CD4-positive, alpha-beta memory T cell (primary cell): ENCODE measurements at regions of chr2 and their contacts with region 1.

Region 1: GRCh38 chr2:181953881-181954537 is 31.6 kb upstream of the PPP1R1C start:
- DNase-seq: peak; percentile 42 to 49 (median 45)
- H3K4me3 ChIP-seq: no peak overlapping the region
- H3K4me3 Mint-ChIP-seq: peak overlapping the region in 7 of 8 donors; percentile 65 to 82 (median 70)
- H3K27ac ChIP-seq: no peak overlapping the region
- H3K27ac Mint-ChIP-seq: no peak overlapping the region
- H3K4me1 ChIP-seq: peaks cover 10% of the 10 kb centered on the region
- H3K4me1 Mint-ChIP-seq: peaks cover 8 to 13% (median 11%) of the 10 kb centered on the region in 4 donors
- H3K27me3 ChIP-seq: no peaks in the 10 kb centered on the region
- H3K27me3 Mint-ChIP-seq: peaks cover 18 to 25% of the 10 kb centered on the region in 2 donors

Region 2: GRCh38 chr2:180125245-180125962 is 1828.6 kb before region 1 on chr2:
- CTCF ChIA-PET with region 1: no interaction called
- POLR2A ChIA-PET with region 1: no interaction called
- intact Hi-C with region 1: loop called (anchors 1 kb)
- DNase-seq: peak; percentile 28 to 44 (median 38)
- H3K4me3 ChIP-seq: no peak overlapping the region
- H3K4me3 Mint-ChIP-seq: peak overlapping the region in 1 of 8 donors; percentile 29
- H3K27ac ChIP-seq: no peak overlapping the region
- H3K27ac Mint-ChIP-seq: no peak overlapping the region
- H3K4me1 ChIP-seq: no peaks in the 10 kb centered on the region
- H3K4me1 Mint-ChIP-seq: peaks cover 0 to 7% (median 4%) of the 10 kb centered on the region in 4 donors
- H3K27me3 ChIP-seq: no peaks in the 10 kb centered on the region
- H3K27me3 Mint-ChIP-seq: peaks cover 0 to 7% of the 10 kb centered on the region in 2 donors

Region 3: DNA sequence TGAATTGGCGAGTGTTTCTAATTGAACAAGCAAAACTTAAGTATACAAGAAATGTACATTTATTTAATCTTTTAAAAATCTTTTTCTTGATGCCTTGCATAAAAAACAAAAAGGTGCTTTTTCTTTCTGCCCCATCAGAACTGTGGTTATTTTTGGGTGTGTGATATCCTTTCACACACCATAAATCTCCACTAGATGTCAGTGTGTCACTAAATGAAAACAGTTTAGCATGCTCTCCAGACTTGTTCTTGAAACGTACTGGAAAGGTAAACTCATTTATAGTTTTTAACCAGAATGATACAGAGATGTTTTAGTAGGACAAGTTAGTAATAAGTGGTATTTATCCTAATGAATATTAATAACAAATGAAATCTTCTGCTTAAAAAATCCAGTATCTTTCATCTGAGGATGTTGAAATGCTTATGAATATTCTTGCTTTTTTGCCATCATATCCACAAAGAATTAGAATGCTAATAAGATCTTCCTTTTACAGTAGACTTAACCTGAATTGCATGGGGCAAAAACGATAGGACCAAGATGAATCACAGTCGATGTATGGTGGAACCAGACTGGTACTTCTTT is 876.8 kb before region 1 on chr2:
- CTCF ChIA-PET with region 1: interaction called, 3 read pairs
- POLR2A ChIA-PET with region 1: no interaction called
- intact Hi-C with region 1: loop called (anchors 1 kb)
- DNase-seq: peak; percentile 36 to 69 (median 65)
- H3K4me3 ChIP-seq: no peak overlapping the region
- H3K4me3 Mint-ChIP-seq: no peak overlapping the region
- H3K27ac ChIP-seq: no peak overlapping the region
- H3K27ac Mint-ChIP-seq: no peak overlapping the region
- H3K4me1 ChIP-seq: no peaks in the 10 kb centered on the region
- H3K4me1 Mint-ChIP-seq: peaks cover 0 to 3% (median 2%) of the 10 kb centered on the region in 4 donors
- H3K27me3 ChIP-seq: no peaks in the 10 kb centered on the region
- H3K27me3 Mint-ChIP-seq: peaks cover 0 to 2% of the 10 kb centered on the region in 2 donors

Region 4: GRCh38 chr2:181998045-181998835 is 44.2 kb after region 1 on chr2:
- CTCF ChIA-PET with region 1: no interaction called
- POLR2A ChIA-PET with region 1: no interaction called
- intact Hi-C with region 1: no loop called
- DNase-seq: no peak
- H3K4me3 ChIP-seq: no peak overlapping the region
- H3K4me3 Mint-ChIP-seq: peak overlapping the region in 1 of 8 donors; percentile 17
- H3K27ac ChIP-seq: no peak overlapping the region
- H3K27ac Mint-ChIP-seq: peak overlapping the region in 1 of 7 donors; percentile 0
- H3K4me1 ChIP-seq: no peaks in the 10 kb centered on the region
- H3K4me1 Mint-ChIP-seq: peaks cover 0 to 11% (median 5%) of the 10 kb centered on the region in 4 donors
- H3K27me3 ChIP-seq: no peaks in the 10 kb centered on the region
- H3K27me3 Mint-ChIP-seq: peaks cover 0 to 2% of the 10 kb centered on the region in 2 donors